ENCODE measurements at regions of chr13 and their contacts with region 1.

Region 1: GRCh38 chr13:60379837-60380236 is 17.2 kb upstream of the TDRD3 start:
- DNase-seq: no peak
- H3K4me3 ChIP-seq: no peak overlapping the region
- H3K27ac ChIP-seq: no peak overlapping the region
- H3K4me1 ChIP-seq: peaks cover 0 to 6% (median 0%) of the 10 kb centered on the region in 6 donors
- H3K27me3 ChIP-seq: no peaks in the 10 kb centered on the region
- CTCF ChIP-seq: no peak
- POLR2A ChIP-seq: no peak

Region 2: DNA sequence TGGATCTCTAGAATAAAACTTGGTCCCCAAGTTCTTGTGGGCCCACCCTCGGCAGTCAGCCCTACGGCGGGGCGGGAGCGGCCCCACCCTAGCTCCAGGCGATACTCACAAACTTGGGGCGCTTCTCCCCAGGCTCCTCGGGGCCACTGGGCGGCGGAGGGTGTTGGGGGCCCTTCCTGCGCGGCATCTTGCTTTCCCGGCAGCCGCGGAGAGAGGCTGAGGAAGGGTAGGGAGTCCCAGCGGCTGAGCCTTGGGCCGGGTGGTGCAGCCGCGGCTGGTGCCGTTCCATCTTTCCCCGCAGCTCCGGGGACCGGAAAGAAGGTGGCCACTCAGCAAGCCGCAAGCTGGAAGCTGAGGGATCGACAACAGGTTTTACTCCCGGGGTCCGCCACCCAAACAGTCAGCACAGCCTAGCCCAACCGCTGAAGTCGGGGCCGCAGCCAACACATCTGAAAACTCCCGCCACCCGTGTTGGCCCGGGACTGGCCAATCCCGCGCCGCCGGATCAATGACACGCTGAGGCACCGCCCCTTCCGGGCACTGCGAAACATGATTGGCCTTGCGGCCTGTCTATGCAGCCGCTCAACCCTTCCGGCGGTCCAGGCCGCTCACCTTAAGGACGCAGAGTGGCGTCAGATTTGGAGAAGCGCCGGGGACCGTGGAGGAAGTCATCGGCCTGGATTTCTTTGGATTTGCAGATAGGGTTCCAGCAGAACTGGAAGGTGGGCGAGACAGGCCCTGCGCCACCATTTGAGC is 216.2 kb before region 1 on chr13 and contains the start of gene DIAPH3:
- intact Hi-C with region 1: loop called (anchors 10 kb)
- DNase-seq: peak; percentile 97
- H3K4me3 ChIP-seq: peak within 1 kb of the TSS; percentile 56 to 83 (median 64)
- H3K27ac ChIP-seq: peak within 1 kb of the TSS; percentile 73 to 88 (median 82)
- H3K4me1 ChIP-seq: peaks cover 0 to 34% (median 23%) of the 10 kb centered on the region in 6 donors
- H3K27me3 ChIP-seq: peaks cover 0 to 3% (median 0%) of the 10 kb centered on the region in 7 donors
- CTCF ChIP-seq: peak in 2 of 11 experiments; percentile 11 to 23
- POLR2A ChIP-seq: peak in 1 of 3 donors; percentile 34
- total RNA-seq, gene DIAPH3: 0.82 to 4.1 (median 1.8) TPM